Left cardiac atrium (tissue), 4 donors: ENCODE measurements at regions of chr4 and their contacts with region 1.

Region 1: GRCh38 chr4:75995727-75996126 is 5.0 kb upstream of the SDAD1 start:
- DNase-seq: no peak
- ATAC-seq: no peak

Region 2: DNA sequence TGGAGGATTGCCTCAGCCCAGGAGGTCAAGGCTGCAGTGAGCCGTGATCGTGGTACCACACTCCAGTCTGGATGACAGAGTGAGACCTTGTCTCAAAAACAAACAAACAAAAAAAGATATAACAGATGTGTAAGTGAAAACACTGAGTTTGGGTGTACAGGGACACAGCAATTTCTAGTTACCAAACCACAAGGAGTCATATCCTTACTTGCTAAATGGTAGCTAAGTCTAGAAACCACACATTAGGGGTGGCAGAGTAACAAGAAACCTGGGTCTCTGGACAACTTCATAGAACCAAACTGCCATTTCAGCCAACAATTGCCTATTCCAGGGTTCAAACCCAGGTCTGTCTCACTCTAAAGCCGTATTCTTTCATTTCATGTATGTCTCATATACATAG is 114.3 kb before region 1 on chr4:
- intact Hi-C with region 1: no loop called
- DNase-seq: no peak
- ATAC-seq: no peak

Region 3: GRCh38 chr4:76055016-76055415 is 59.3 kb after region 1 on chr4:
- intact Hi-C with region 1: no loop called
- DNase-seq: no peak
- ATAC-seq: no peak

Region 4: DNA sequence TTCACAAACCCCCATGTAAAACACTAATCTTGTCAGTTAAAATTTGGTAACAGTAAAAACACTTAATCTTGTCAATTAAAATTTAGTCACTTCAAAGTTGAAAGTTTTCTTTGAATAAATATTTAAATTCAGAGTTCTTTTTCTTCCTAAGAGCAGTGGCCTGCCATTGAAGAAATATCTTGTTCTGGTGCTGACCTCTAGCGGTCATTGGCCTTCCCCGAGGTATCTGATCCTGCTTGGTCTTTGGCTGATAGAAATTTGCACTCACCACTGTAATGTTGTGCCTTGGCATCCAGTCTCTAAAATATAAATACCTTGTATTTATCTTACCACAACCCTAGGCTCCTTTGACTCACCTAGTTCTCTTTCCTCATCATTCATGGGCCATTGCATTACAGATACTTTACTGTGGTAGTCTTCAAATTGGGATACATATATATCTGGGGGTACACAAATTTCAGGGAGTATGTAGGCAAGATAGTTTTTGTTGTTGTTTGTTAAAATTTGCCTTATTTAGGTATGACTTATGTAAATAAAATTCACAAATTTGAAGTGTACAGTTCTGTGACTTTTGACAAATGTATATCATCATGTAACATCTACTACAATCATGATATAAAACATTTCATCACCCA is 72.0 kb after region 1 on chr4:
- intact Hi-C with region 1: loop called (anchors 2 kb)
- DNase-seq: peak; percentile 75
- ATAC-seq: peak; percentile 70 to 85

Region 5: GRCh38 chr4:76087007-76087769 is 91.5 kb after region 1 on chr4:
- intact Hi-C with region 1: loop called in 1 of 2 experiments (anchors 1 kb)
- DNase-seq: peak; percentile 28
- ATAC-seq: peak; percentile 89

Region 6: DNA sequence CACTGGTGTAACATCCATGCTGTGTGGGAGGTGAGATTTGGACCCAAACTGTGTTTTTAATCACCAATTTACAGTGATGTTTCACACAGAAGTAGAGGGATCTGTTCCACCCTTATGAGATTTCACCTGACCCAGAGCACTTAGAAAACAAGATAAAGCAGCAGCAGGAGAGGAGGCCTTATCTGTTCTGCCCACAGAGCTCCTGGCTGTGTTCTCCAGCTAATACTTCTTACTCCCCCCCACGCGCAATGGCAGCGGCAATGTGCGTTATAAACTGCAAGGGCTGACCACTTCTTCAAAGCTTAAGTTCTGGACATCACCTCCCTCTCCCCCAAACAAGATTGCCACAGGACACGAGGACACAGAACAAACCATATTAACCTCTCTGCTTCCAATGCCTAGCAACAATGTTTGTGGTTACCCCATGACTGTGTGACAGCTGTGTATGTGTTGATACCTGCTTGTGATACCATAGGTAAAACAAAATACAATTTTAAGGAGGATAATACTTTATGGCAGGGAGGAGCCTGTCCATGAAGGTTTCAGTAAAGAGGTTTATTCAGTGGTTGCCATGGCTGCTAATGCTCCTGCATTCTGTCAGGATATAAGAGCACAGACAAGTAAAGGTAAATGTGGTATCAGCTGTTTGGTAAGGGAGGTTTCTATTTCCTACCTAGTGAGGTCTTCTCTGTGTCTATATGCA is 692.2 kb after region 1 on chr4:
- intact Hi-C with region 1: no loop called
- DNase-seq: no peak
- ATAC-seq: peak in 1 of 2 donors; percentile 55